HEK293 (cell line): ENCODE measurements at regions of chr6 and their contacts with region 1.

Region 1: DNA sequence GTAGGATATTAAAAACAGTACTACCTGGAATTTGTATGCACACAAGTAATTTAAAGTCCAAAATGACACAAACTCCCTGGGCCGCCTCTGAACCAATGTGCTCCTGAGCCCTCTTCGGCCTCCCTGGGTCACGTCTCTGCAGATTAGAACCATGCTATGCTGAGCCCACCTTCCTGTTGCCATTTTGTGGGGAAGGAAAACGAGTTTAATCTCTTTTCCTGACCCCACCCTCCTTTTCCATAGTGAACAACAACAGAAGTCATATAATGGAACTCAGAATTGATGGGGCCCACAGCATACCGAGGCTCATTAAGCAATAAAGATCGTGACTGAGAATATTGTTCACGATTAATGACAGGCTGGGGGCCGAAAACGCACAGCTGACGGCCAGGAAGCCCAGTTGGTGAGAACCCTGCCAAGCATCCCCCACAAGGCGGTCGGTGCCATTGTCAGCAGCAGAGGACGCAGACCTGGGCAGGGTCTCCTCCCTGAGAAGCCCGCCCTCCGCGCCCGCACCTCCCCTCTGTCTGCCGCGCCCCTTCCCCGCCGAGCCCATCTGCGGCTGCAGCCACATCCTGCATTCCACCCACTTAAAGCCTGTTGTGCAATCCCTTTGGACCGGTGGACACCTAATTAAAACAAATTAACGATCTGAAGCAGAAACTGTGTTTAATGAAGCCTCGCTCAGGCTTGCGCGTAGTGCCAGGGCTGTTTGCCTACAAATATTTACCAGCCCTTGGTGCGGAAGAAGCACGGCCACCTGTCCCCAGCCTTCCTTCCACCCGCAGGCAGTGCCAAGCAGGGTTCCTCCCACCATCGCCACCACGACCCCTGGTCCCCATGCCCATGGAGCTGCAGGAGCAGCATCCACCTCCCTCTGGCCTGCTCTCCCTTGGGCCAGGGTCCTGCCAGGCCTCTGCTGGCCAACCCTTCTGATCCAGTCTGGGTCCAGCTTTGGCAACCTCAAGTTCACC is 68.1 kb downstream of the DLL1 start:
- H3K4me3 ChIP-seq: no peak overlapping the region
- H3K27ac ChIP-seq: no peak overlapping the region
- H3K4me1 ChIP-seq: no peaks in the 10 kb centered on the region
- CTCF ChIP-seq: no peak

Region 2: DNA sequence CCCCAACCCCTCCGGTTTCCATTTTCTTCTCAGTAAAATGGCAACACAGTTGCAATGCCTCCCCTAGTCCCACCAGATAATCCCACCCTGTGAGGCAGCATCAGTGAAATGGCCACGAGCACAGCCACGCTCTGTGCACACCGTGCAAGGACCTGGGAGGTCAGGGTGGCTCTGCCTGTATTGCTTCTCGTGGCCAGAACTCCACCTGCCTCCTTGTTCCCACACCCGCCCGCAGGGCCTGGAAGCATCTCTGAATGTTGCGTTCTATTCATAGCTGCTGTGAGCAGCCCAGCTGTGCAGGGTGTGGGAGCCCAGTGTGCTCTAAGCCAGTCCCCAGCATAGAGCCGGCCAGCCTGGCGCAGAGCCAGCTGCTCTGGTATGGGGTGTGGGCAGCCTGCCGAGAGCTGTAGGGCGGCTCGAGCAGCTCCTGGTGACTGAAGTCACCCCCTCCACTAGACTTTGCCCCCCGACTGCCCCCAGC is 93.1 kb before region 1 on chr6:
- CTCF ChIA-PET with region 1: no interaction called
- POLR2A ChIA-PET with region 1: no interaction called
- H3K4me3 ChIP-seq: no peak overlapping the region
- H3K27ac ChIP-seq: no peak overlapping the region
- H3K4me1 ChIP-seq: no peaks in the 10 kb centered on the region
- CTCF ChIP-seq: no peak

Region 3: DNA sequence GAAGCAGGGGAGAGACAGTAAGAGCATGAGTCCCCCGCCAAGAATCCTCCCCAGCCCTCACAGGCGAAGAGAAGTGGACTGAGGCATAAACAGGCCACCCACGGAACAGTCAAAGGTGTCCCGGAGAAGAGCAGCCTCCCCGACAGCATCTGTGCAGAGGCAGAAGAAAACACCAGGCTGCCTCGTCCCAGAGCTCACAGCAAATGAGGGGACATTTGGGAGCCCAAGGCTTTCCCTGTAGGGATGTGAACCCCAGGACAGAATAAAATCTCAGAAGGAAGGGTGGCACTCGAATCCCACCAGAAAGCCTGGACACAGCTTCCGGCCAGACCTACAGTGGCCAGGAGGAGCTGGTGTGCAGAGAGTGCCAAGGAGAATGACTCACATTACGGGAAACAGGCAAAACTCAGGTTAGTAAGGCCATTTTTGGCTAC is 22.3 kb before region 1 on chr6:
- CTCF ChIA-PET with region 1: no interaction called
- POLR2A ChIA-PET with region 1: no interaction called
- H3K4me3 ChIP-seq: no peak overlapping the region
- H3K27ac ChIP-seq: no peak overlapping the region
- H3K4me1 ChIP-seq: no peaks in the 10 kb centered on the region
- CTCF ChIP-seq: no peak

Region 4: DNA sequence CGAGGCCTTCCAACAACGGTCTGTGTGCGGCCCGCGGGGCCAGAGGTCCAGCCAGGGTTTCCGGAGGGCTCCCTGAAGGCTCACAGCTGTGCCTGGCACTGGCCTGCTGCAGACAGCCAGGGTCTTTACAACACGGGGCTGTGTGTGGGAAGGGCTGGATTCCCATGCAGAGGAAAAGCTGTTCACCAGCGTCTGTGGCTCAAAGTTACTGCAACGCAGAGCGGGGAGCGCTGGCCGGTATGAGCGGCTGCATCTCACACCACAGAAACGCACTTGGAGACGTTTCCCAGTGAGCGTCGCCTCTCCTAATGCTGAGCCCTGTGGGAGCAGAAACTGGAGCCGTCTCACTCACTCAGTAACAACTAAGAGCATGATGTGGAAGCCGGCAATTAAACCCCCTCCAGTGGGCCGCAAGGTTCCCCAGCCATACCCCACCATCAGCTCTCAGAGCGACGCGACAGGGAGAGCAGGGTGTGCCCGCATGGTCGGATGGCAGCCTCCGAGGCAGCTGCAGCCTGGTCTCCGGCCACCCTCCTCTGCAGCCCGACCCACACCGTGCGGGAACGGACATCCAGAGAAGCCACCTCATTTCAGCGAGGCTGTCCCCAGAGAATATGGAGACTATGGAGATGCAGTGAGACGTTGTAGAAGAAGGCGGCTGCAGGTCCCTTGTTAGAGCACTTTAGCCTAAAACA is 25.5 kb after region 1 on chr6:
- CTCF ChIA-PET with region 1: no interaction called
- POLR2A ChIA-PET with region 1: no interaction called
- H3K4me3 ChIP-seq: no peak overlapping the region
- H3K27ac ChIP-seq: no peak overlapping the region
- H3K4me1 ChIP-seq: no peaks in the 10 kb centered on the region
- CTCF ChIP-seq: no peak

Region 5: DNA sequence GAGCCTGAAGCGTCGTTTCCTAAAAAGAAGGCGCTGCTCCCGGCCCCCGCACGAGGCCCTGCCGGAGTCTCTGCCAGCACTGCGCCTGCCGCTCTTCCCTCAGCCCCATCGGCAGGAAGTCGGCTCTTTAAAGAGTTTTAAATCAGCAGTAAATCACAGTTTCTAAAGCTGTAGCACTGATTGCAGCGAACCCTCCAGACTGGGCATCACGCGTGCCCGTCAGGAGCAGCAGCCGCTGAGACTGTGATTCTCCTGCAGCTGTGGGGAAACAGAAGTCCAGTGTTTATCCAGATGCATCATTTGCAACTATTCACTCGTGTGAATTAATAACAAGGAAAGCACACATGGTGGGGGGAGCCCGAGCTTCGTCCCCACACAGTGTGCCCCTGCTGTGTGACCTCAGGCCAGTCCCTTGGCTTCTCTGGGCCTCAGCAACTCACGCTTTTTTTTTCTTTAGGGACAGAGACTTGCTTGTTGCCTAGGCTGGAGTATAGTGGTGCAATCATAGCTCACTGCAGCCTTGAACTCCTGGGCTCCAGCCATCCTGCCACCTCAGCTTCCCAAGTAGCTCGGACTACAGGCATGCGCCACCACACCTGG is 39.8 kb after region 1 on chr6:
- CTCF ChIA-PET with region 1: interaction called, 4 read pairs
- POLR2A ChIA-PET with region 1: interaction called, 11 read pairs
- H3K4me3 ChIP-seq: no peak overlapping the region
- H3K27ac ChIP-seq: no peak overlapping the region
- H3K4me1 ChIP-seq: no peaks in the 10 kb centered on the region
- CTCF ChIP-seq: no peak

Region 6: GRCh38 chr6:170476360-170476759 is 253.6 kb after region 1 on chr6:
- CTCF ChIA-PET with region 1: no interaction called
- POLR2A ChIA-PET with region 1: no interaction called
- H3K4me3 ChIP-seq: no peak overlapping the region
- H3K27ac ChIP-seq: no peak overlapping the region
- H3K4me1 ChIP-seq: no peaks in the 10 kb centered on the region
- CTCF ChIP-seq: no peak